Activated CD4-positive, alpha-beta T cell treated with anti-CD3 and anti-CD28 coated beads, Interleukin-2, amount 10 ng/mL, durations not matched to agents 24 days and 14 days (primary cell): ENCODE measurements at regions of chr1 and their contacts with region 1.

Region 1: GRCh38 chr1:41639332-41639936 is 155.0 kb upstream of the EDN2 start:
- DNase-seq: peak; percentile 71
- H3K4me3 Mint-ChIP-seq: no peak overlapping the region
- H3K27ac Mint-ChIP-seq: no peak overlapping the region
- H3K4me1 Mint-ChIP-seq: peaks cover 42% of the 10 kb centered on the region
- H3K27me3 Mint-ChIP-seq: no peaks in the 10 kb centered on the region

Region 2: GRCh38 chr1:41607808-41608207 is 31.6 kb before region 1 on chr1:
- intact Hi-C with region 1: loop called (anchors 5 kb)
- DNase-seq: no peak
- H3K4me3 Mint-ChIP-seq: no peak overlapping the region
- H3K27ac Mint-ChIP-seq: peak overlapping the region; percentile 88
- H3K4me1 Mint-ChIP-seq: peaks cover 47% of the 10 kb centered on the region
- H3K27me3 Mint-ChIP-seq: no peaks in the 10 kb centered on the region

Region 3: DNA sequence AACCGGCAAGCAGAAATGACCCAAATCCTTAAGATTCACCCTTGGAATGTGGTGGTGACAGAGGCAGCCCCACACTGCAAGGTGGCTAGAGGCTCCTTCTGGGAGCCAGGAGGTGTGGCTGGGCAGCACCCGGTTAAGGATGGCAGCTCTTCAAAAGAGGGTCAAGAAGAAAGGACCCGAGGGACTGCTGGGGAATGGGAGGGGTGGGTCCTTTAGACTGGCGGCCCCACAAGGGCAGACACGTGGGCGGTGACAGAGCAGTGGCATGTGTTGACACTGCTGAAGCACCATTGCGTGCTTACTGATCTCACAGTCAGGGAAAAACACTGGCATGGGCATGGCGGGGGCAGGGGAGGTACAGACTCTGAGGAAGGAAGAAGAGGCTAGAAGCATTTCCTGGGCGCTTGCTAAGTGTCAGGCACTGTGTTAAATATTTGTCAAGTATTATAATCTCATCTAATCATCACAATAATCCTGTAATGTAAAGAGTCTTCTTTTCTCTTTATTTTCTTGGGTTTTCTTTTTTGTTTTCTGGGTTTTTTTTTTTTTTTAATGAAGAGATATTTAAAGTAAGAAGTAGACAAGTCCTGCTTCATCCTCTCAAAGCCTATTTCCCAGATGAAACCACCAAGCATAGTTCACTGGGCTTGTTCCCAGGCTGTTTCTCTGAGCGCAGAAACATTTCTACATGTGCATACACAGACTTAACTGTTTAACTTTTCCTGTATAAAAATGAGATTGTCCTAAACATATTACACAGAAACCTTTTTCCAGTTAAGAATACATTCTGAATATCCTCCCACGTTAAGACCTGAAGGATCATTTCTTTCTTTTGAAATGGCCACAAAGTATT is 10.8 kb after region 1 on chr1:
- intact Hi-C with region 1: loop called (anchors 1 kb)
- DNase-seq: peak; percentile 72
- H3K4me3 Mint-ChIP-seq: peak overlapping the region; percentile 55
- H3K27ac Mint-ChIP-seq: peak overlapping the region; percentile 80
- H3K4me1 Mint-ChIP-seq: peaks cover 76% of the 10 kb centered on the region
- H3K27me3 Mint-ChIP-seq: no peaks in the 10 kb centered on the region

Region 4: DNA sequence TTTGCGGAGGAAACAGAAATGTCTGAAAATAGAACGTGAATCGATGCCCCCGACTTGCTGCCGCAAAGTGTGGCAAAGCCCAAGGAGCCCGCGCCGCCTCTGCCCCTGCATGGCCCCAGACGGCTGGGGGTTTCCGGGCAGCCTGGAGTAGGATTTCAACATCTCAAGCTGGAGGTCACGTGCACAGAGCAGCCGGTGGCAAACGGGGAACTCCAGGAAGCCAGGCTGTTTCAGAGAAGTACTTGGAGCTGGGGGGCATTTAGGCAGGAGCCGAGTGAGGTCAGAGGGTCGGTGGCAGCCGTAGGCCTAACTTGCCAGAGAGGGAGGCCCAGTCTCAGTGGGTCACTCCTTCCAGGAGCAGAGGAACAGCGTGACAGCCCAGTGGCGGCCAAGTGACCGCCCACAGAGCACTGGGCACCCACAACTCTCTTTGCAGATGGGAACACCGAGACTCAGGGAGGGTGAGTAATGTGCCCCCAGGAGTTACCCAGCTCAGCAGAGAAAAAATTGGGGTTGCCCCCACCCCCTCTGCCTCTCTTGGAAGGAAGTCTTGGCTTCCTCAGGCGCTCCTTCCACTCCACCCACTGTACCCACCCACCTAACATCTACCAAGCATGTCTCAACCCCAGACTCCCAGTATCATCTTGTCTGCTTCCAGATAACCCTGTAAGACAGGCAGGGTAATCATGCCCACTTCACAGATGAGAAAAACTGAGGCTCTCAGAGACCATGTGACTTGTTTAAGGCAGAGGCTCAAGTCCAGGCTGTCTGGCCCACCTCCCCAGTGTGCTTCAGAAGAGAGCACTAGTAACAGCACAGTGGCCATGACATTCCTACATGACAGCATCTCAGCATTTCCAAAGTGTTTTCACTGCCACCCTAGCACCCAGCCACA is 99.9 kb after region 1 on chr1:
- intact Hi-C with region 1: loop called (anchors 1 kb)
- DNase-seq: peak; percentile 92
- H3K4me3 Mint-ChIP-seq: peak overlapping the region; percentile 61
- H3K27ac Mint-ChIP-seq: peak overlapping the region; percentile 94
- H3K4me1 Mint-ChIP-seq: peaks cover 87% of the 10 kb centered on the region
- H3K27me3 Mint-ChIP-seq: no peaks in the 10 kb centered on the region

Region 5: DNA sequence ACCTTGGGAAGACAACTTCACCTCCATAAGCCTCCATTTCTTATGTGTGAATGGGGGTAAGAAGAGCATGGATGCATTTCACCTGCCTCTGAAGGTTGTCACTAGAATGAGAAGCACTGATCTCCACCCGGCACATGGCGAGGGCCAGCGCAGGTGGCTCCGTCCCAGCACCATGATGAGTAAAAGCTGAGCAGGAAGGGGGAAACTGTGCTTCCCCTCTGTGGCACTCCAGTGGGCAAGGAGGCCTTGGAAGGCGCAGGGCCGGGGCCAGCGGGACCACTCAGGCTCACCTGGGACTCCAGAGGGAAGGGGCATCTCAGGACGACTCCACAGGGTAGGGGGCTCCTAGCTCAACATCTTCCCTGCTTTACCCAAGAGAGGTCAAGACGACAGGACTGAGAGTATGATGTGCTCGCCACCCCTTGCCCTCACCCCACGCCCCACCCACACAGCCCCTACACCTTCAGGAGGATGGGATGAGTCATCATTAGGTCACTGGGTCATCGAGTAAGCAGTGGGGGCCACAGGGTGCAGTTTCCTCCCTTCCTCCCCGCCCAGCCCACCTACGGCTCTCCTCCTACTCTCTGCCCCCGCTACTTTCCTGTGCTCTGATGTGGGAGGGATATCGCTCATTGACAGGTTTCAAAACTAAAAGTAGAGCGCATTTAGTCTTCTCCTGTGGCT is 167.2 kb after region 1 on chr1:
- intact Hi-C with region 1: loop called (anchors 2 kb)
- DNase-seq: peak; percentile 86
- H3K4me3 Mint-ChIP-seq: peak overlapping the region; percentile 76
- H3K27ac Mint-ChIP-seq: peak overlapping the region; percentile 91
- H3K4me1 Mint-ChIP-seq: peaks cover 86% of the 10 kb centered on the region
- H3K27me3 Mint-ChIP-seq: no peaks in the 10 kb centered on the region

Region 6: DNA sequence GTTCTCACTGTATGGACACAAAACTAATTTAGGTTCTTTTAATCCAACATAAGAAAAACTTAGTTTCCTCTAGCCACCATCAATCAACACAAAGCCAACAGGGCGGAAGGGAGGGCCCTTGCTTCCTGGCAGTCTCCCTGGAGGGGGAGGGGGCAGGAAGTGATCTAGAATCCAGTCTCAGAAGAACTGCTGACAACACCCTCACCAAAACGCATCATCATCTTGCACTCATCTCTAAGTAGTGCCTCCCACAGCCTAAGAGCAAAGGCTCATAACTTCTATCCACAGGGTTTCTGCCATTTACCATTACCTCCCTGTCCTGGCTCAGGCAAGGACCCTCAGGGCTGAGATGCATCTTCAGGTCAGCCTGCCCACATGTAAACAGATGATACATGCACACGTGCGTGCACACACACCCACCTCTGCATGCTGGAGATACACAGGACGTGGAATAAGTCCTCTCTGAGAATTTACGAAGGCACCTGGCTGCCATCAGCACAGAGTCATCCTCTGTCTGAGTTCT is 258.8 kb after region 1 on chr1:
- intact Hi-C with region 1: no loop called
- DNase-seq: peak; percentile 95
- H3K4me3 Mint-ChIP-seq: peak overlapping the region; percentile 68
- H3K27ac Mint-ChIP-seq: peak overlapping the region; percentile 89
- H3K4me1 Mint-ChIP-seq: peaks cover 77% of the 10 kb centered on the region
- H3K27me3 Mint-ChIP-seq: no peaks in the 10 kb centered on the region